GM12878 (cell line): ENCODE measurements at regions of chr10 and their contacts with region 1.

Region 1: GRCh38 chr10:59090817-59091622 is 85.4 kb upstream of the PHYHIPL start:
- DNase-seq: no peak
- ATAC-seq: no peak; the same call in 1 of the 3 replicates
- H3K4me3 ChIP-seq: no peak overlapping the region
- H3K27ac ChIP-seq: no peak overlapping the region
- H3K4me1 ChIP-seq: no peaks in the 10 kb centered on the region
- H3K27me3 ChIP-seq: no peaks in the 10 kb centered on the region
- CTCF ChIP-seq: no peak
- EP300 ChIP-seq: no peak
- POLR2A ChIP-seq: no peak
- RAD21 ChIP-seq: no peak

Region 2: GRCh38 chr10:59073456-59074053 is 17.5 kb before region 1 on chr10:
- CTCF ChIA-PET with region 1: interaction called, 3 read pairs
- POLR2A ChIA-PET with region 1: interaction called, 5 read pairs
- RAD21 ChIA-PET with region 1: interaction called, 12 read pairs
- SMC1A ChIA-PET with region 1: interaction called, 75 read pairs
- in situ Hi-C with region 1: no loop called
- intact Hi-C with region 1: no loop called
- DNase-seq: no peak
- ATAC-seq: peak; percentile 14; the same call in 1 of the 3 replicates
- H3K4me3 ChIP-seq: no peak overlapping the region
- H3K27ac ChIP-seq: no peak overlapping the region
- H3K4me1 ChIP-seq: no peaks in the 10 kb centered on the region
- H3K27me3 ChIP-seq: no peaks in the 10 kb centered on the region
- CTCF ChIP-seq: no peak
- EP300 ChIP-seq: no peak
- POLR2A ChIP-seq: no peak
- RAD21 ChIP-seq: no peak

Region 3: GRCh38 chr10:59079386-59080226 is 11.4 kb before region 1 on chr10:
- CTCF ChIA-PET with region 1: interaction called, 19 read pairs
- POLR2A ChIA-PET with region 1: interaction called, 4 read pairs
- RAD21 ChIA-PET with region 1: interaction called, 12 read pairs
- SMC1A ChIA-PET with region 1: interaction called, 75 read pairs
- in situ Hi-C with region 1: no loop called
- intact Hi-C with region 1: no loop called
- DNase-seq: no peak
- ATAC-seq: no peak
- H3K4me3 ChIP-seq: no peak overlapping the region
- H3K27ac ChIP-seq: no peak overlapping the region
- H3K4me1 ChIP-seq: 0 out of 2 replicates have a peak, but pooled peaks cover 3% of the 10 kb centered on the region
- H3K27me3 ChIP-seq: no peaks in the 10 kb centered on the region
- CTCF ChIP-seq: no peak
- EP300 ChIP-seq: no peak
- POLR2A ChIP-seq: no peak
- RAD21 ChIP-seq: no peak

Region 4: GRCh38 chr10:59190332-59190731 is 99.3 kb after region 1 on chr10:
- CTCF ChIA-PET with region 1: no interaction called
- POLR2A ChIA-PET with region 1: interaction called, 10 read pairs
- RAD21 ChIA-PET with region 1: no interaction called
- SMC1A ChIA-PET with region 1: no interaction called
- in situ Hi-C with region 1: no loop called
- intact Hi-C with region 1: no loop called
- DNase-seq: no peak
- ATAC-seq: no peak
- H3K4me3 ChIP-seq: no peak overlapping the region
- H3K27ac ChIP-seq: no peak overlapping the region
- H3K4me1 ChIP-seq: no peaks in the 10 kb centered on the region
- H3K27me3 ChIP-seq: no peaks in the 10 kb centered on the region
- CTCF ChIP-seq: no peak
- EP300 ChIP-seq: no peak
- POLR2A ChIP-seq: no peak
- RAD21 ChIP-seq: no peak

Region 5: DNA sequence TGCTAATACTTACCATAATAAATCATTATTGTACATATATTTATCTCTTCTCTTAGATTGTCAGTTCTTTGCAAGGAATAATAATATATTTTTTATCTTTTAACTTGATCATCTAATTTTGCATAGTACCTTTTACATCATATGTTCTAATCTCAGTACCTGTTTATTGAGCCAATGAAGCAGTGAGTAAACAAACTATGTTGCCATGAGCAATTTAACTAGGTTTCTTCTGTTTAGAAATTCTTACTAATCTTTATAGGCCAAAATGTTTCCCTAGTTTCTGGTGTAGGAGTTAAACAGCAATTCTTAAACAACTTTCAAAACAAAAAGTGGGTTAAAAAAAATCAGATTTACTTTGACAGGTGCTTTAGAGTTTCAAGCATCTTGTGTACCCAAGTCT is 146.8 kb after region 1 on chr10:
- CTCF ChIA-PET with region 1: no interaction called
- POLR2A ChIA-PET with region 1: no interaction called
- RAD21 ChIA-PET with region 1: no interaction called
- SMC1A ChIA-PET with region 1: no interaction called
- in situ Hi-C with region 1: no loop called
- intact Hi-C with region 1: no loop called
- DNase-seq: no peak
- ATAC-seq: no peak
- H3K4me3 ChIP-seq: no peak overlapping the region
- H3K27ac ChIP-seq: no peak overlapping the region
- H3K4me1 ChIP-seq: no peaks in the 10 kb centered on the region
- H3K27me3 ChIP-seq: no peaks in the 10 kb centered on the region
- CTCF ChIP-seq: no peak
- EP300 ChIP-seq: no peak
- POLR2A ChIP-seq: no peak
- RAD21 ChIP-seq: no peak

Region 6: GRCh38 chr10:59700709-59701108 is 609.7 kb after region 1 on chr10:
- CTCF ChIA-PET with region 1: no interaction called
- POLR2A ChIA-PET with region 1: no interaction called
- RAD21 ChIA-PET with region 1: no interaction called
- SMC1A ChIA-PET with region 1: no interaction called
- in situ Hi-C with region 1: no loop called
- intact Hi-C with region 1: no loop called
- DNase-seq: no peak
- ATAC-seq: no peak
- H3K4me3 ChIP-seq: no peak overlapping the region
- H3K27ac ChIP-seq: no peak overlapping the region
- H3K4me1 ChIP-seq: no peaks in the 10 kb centered on the region
- H3K27me3 ChIP-seq: no peaks in the 10 kb centered on the region
- CTCF ChIP-seq: peak in 1 of 3 experiments; percentile 9; a peak in 1 of 6 replicates
- EP300 ChIP-seq: no peak
- POLR2A ChIP-seq: no peak
- RAD21 ChIP-seq: 0 out of 2 replicates have a peak, but pooled peaks have one; percentile 3